WTC11 (cell line): ENCODE measurements at regions of chr1 and their contacts with region 1.

Region 1: GRCh38 chr1:11967028-11967547 is 13.2 kb upstream of the MFN2 start:
- DNase-seq: peak; percentile 78
- ATAC-seq: peak; percentile 99
- H3K4me3 Mint-ChIP-seq: no peak overlapping the region
- H3K27ac Mint-ChIP-seq: peak overlapping the region; percentile 74; the same call in 1 of the 2 replicates
- H3K4me1 Mint-ChIP-seq: no peaks in the 10 kb centered on the region
- H3K27me3 Mint-ChIP-seq: no peaks in the 10 kb centered on the region
- CTCF ChIP-seq: no peak

Region 2: DNA sequence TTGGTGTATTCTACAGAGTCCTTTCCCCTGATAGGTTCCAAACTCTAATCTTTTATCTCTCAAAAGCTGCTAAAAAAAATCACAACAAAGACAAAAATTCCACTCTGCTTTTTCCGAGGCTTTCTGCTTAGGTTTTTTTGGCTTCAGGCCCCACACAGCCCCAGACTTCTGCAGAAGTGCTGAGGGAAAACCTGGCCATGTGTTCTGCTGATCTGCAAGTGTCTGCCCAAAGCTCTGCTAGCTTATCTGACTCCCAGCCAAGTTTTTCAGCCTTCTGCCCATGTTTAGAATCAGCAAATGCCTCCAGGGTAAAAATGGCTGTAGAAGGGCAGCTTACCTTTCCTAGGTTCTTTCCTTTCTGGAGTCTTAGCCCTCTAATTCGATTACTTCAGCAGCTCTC is 459.8 kb before region 1 on chr1:
- CTCF ChIA-PET with region 1: no interaction called
- POLR2A ChIA-PET with region 1: no interaction called
- DNase-seq: no peak
- ATAC-seq: no peak
- H3K4me3 Mint-ChIP-seq: no peak overlapping the region
- H3K27ac Mint-ChIP-seq: no peak overlapping the region
- H3K4me1 Mint-ChIP-seq: peaks cover 2% of the 10 kb centered on the region; the same call in 1 of the 2 replicates
- H3K27me3 Mint-ChIP-seq: peaks cover 7% of the 10 kb centered on the region; the same call in 1 of the 2 replicates
- CTCF ChIP-seq: no peak

Region 3: GRCh38 chr1:11838349-11839272 is 128.5 kb before region 1 on chr1:
- CTCF ChIA-PET with region 1: interaction called, 44 read pairs
- POLR2A ChIA-PET with region 1: no interaction called
- DNase-seq: peak; percentile 84
- ATAC-seq: peak; percentile 94
- H3K4me3 Mint-ChIP-seq: no peak overlapping the region
- H3K27ac Mint-ChIP-seq: no peak overlapping the region; the same call in 1 of the 2 replicates
- H3K4me1 Mint-ChIP-seq: no peaks in the 10 kb centered on the region
- H3K27me3 Mint-ChIP-seq: no peaks in the 10 kb centered on the region
- CTCF ChIP-seq: peak; percentile 89

Region 4: GRCh38 chr1:11882814-11883538 is 84.1 kb before region 1 on chr1:
- CTCF ChIA-PET with region 1: interaction called, 12 read pairs
- POLR2A ChIA-PET with region 1: no interaction called
- DNase-seq: peak; percentile 66
- ATAC-seq: peak; percentile 84
- H3K4me3 Mint-ChIP-seq: no peak overlapping the region
- H3K27ac Mint-ChIP-seq: peak overlapping the region; percentile 58; the same call in 1 of the 2 replicates
- H3K4me1 Mint-ChIP-seq: peaks cover 8% of the 10 kb centered on the region
- H3K27me3 Mint-ChIP-seq: no peaks in the 10 kb centered on the region
- CTCF ChIP-seq: no peak

Region 5: DNA sequence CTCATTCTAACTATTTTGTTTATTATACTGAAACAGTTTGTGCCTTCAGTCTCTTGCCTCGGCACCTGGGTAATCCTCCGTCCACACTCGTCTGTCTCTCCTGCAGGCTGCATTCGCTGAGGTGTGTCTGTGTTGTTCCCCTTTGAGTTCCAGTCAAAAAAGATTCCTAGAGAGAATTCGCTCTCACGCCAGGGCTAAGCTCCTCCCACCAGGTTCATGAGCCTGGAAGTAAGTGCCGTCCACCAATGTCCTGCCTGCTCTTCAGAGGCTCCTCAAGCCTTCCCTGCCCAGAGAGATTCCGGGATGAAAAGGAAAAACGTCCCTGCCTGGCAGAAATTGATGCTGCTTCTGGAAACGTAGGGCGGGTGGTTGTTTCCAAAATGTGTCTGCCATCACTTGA is 53.8 kb before region 1 on chr1:
- CTCF ChIA-PET with region 1: interaction called, 49 read pairs
- POLR2A ChIA-PET with region 1: interaction called, 61 read pairs
- DNase-seq: peak; percentile 31
- ATAC-seq: no peak
- H3K4me3 Mint-ChIP-seq: no peak overlapping the region
- H3K27ac Mint-ChIP-seq: peak overlapping the region; percentile 70
- H3K4me1 Mint-ChIP-seq: peaks cover 12% of the 10 kb centered on the region
- H3K27me3 Mint-ChIP-seq: no peaks in the 10 kb centered on the region; the same call in 1 of the 2 replicates
- CTCF ChIP-seq: no peak

Region 6: GRCh38 chr1:11934302-11935056 is 32.6 kb before region 1 on chr1 and contains the start of gene PLOD1:
- CTCF ChIA-PET with region 1: interaction called, 15 read pairs
- POLR2A ChIA-PET with region 1: interaction called, 3 read pairs
- DNase-seq: peak; percentile 76
- ATAC-seq: peak; percentile 89
- H3K4me3 Mint-ChIP-seq: peak within 1 kb of the TSS; percentile 70
- H3K27ac Mint-ChIP-seq: peak within 1 kb of the TSS; percentile 91
- H3K4me1 Mint-ChIP-seq: peaks cover 24% of the 10 kb centered on the region
- H3K27me3 Mint-ChIP-seq: no peaks in the 10 kb centered on the region
- CTCF ChIP-seq: no peak
- total RNA-seq, gene PLOD1: 46.9 to 73.8 TPM (median 67.3 TPM) in 3 replicates

Region 7: DNA sequence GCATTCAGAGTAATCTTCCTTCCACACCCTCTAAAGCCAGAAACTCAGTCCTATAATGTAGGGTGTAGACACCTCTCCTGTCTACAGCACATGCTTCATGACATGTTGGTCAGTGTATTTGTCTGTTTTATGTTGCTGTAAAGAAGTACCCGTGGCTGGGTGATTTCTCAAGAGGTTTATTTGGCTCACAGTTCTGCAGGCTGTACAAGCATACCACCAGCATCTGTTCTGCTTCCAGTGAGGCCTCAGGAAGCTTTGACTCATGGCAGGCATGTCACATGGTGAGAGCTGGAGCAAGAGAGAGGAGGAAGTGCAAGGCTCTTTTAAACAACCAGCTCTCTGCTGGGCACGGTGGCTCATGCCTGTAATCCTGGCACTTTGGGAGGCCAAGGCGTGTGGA is 20.4 kb before region 1 on chr1:
- CTCF ChIA-PET with region 1: interaction called, 25 read pairs
- POLR2A ChIA-PET with region 1: interaction called, 3 read pairs
- DNase-seq: no peak
- ATAC-seq: no peak
- H3K4me3 Mint-ChIP-seq: no peak overlapping the region
- H3K27ac Mint-ChIP-seq: peak overlapping the region; percentile 53; the same call in 1 of the 2 replicates
- H3K4me1 Mint-ChIP-seq: peaks cover 29% of the 10 kb centered on the region
- H3K27me3 Mint-ChIP-seq: no peaks in the 10 kb centered on the region; the same call in 1 of the 2 replicates
- CTCF ChIP-seq: no peak